ENCODE measurements at regions of chr4 and their contacts with region 1.

Region 1: DNA sequence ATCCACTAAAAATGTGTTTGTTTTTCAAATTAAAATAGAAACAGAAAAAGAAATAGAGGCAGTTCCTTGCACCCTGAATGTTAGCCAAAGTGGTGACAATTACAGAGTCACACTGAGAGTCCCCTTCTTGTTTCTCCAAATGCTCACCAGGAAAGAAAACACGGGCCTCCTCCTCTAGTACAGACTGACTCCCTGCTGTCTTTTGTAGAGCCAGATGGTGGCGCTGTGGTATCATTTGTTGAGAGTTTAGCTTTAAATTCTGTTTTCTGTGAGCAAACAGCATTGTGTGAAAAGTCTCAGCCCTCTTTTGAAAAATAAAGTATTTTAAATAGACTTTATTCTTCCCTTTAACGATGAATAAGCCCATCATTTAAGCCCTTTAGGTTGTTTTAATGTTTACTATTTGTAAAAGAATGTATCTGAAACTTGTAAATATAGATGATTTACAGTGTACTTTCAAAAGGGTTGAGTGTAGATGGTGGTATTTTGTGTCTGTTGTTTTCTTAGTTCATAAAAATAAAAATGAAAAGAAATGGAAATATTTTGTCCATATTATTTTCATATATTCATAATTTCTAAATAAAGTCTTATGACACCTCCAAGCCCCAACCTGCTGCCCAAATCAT is 36.9 kb upstream of the ATOH1 start:
- DNase-seq: peak; percentile 62
- ATAC-seq: peak; percentile 55
- H3K4me3 Mint-ChIP-seq: no peak overlapping the region
- H3K27ac Mint-ChIP-seq: no peak overlapping the region
- H3K4me1 Mint-ChIP-seq: no peaks in the 10 kb centered on the region
- H3K27me3 Mint-ChIP-seq: peaks cover 2% of the 10 kb centered on the region

Region 2: DNA sequence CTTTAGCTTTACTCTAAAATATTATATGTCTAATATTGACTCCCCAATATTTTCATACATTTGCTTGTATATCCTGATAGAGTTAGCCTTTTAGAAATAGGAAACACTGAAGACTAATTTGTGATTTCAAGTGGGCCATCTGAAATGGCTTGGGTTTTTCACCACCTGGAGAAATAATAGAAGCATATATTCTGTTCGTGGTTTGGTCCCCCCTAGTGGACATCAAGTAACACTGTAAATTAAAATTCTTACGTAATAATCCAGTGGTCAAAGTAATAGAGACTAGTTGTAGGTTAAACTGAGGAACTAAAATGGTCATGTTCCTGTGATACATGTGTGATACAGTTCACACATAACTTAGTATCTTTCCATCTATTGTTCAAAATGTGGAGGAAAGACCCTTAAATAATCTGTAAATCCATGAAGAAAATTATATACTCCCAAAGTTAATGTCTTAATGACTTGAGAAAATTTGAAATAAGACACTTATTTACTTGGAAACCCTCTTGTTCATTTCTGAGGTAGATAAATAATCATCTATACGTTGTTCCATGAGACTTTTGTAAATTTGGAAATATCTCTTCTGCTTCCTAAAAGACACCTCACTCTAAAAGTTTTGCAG is 336.1 kb after region 1 on chr4:
- CTCF ChIA-PET with region 1: interaction called, 3 read pairs
- POLR2A ChIA-PET with region 1: no interaction called
- intact Hi-C with region 1: loop called (anchors 1 to 2 kb)
- DNase-seq: no peak
- ATAC-seq: no peak
- H3K4me3 Mint-ChIP-seq: no peak overlapping the region
- H3K27ac Mint-ChIP-seq: no peak overlapping the region
- H3K4me1 Mint-ChIP-seq: no peaks in the 10 kb centered on the region
- H3K27me3 Mint-ChIP-seq: peaks cover 7% of the 10 kb centered on the region

Region 3: DNA sequence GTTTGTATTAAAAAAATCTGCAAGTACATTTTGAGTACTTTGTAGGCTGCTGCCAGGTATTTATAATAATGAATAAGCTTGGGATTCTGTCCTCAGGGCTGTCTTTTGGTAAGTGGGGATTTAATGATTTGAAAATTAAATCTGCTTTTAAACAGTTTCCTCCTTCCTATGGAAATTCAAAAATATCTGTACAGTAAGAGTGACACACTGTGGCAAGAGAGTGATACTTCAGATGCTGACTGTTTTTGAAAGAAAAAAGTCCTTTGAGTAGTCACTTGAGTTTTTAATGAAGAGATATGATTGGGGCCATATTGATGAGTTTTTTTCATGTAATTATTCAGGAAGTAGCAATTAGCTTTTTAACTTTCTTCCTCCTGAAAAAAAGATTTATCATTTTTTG is 465.1 kb after region 1 on chr4:
- CTCF ChIA-PET with region 1: no interaction called
- POLR2A ChIA-PET with region 1: no interaction called
- intact Hi-C with region 1: loop called in 1 of 2 experiments (anchors 1 kb)
- DNase-seq: no peak
- ATAC-seq: no peak
- H3K4me3 Mint-ChIP-seq: no peak overlapping the region
- H3K27ac Mint-ChIP-seq: no peak overlapping the region
- H3K4me1 Mint-ChIP-seq: peaks cover 2% of the 10 kb centered on the region
- H3K27me3 Mint-ChIP-seq: no peaks in the 10 kb centered on the region

Region 4: GRCh38 chr4:94290245-94290644 is 498.6 kb after region 1 on chr4:
- CTCF ChIA-PET with region 1: no interaction called
- POLR2A ChIA-PET with region 1: no interaction called
- intact Hi-C with region 1: no loop called
- DNase-seq: no peak
- ATAC-seq: no peak
- H3K4me3 Mint-ChIP-seq: no peak overlapping the region
- H3K27ac Mint-ChIP-seq: no peak overlapping the region
- H3K4me1 Mint-ChIP-seq: no peaks in the 10 kb centered on the region
- H3K27me3 Mint-ChIP-seq: no peaks in the 10 kb centered on the region

Region 5: DNA sequence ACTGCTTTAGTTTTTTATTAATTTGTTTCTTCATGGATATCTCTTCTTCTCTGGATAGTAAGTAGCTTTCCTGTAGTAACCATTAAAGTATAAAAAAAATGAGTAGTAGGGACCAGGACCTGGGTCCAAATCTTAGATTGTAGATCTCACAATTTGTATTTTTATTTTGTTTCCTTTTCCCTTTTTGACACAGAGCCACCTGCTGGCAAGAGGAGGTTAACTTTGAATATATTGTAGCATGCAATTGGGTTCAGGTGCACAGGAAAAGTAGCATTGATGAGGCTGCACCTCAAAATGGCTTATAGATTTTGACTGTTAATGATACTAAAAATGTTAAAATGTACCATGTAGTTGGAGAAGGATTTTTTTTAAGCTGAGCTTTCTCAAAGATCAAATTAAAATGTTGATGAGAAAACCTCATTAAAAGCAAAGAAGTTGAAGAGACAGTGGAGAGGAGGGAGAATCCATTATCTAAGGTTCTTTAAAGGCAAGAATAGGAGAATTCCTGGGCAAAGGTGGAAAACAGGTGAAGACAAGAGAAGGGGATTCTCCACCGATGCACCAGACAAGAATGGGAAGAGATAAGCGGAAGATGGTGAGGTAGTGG is 599.2 kb after region 1 on chr4:
- CTCF ChIA-PET with region 1: interaction called, 3 read pairs
- POLR2A ChIA-PET with region 1: no interaction called
- intact Hi-C with region 1: loop called in 1 of 2 experiments (anchors 2 kb)
- DNase-seq: peak; percentile 43
- ATAC-seq: no peak
- H3K4me3 Mint-ChIP-seq: no peak overlapping the region
- H3K27ac Mint-ChIP-seq: no peak overlapping the region
- H3K4me1 Mint-ChIP-seq: no peaks in the 10 kb centered on the region
- H3K27me3 Mint-ChIP-seq: peaks cover 7% of the 10 kb centered on the region

Region 6: DNA sequence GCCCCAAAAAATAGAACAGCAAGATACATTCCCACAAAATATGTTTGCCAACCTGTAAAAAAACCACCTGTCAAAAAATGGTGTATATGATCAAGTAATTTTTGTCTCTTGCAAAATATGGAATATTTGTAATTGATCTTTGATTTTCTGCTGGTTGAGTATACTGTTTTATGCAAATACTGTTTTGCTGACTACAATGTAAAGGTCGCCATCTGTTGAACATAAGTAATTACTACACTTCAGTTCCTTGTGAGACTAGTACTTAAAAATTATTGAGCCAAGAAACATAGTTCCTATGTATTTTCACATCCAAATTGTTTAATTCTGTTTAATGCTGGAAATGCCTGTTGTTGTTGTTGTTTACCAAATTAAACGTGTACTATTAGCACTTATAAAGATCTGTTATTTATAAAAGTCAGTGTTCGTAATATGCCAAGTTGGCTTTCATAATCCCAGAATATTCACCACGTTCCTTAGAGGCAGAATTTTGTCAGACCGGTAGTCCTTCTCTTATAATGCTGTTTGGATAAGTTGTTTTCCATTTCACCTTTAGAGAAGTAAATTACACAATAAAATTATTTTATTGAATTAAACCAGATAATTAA is 804.3 kb after region 1 on chr4:
- CTCF ChIA-PET with region 1: no interaction called
- POLR2A ChIA-PET with region 1: no interaction called
- intact Hi-C with region 1: loop called in 1 of 2 experiments (anchors 2 kb)
- DNase-seq: no peak
- ATAC-seq: peak; percentile 53
- H3K4me3 Mint-ChIP-seq: no peak overlapping the region
- H3K27ac Mint-ChIP-seq: no peak overlapping the region
- H3K4me1 Mint-ChIP-seq: no peaks in the 10 kb centered on the region
- H3K27me3 Mint-ChIP-seq: no peaks in the 10 kb centered on the region